ENCODE measurements at regions of chr2 and their contacts with region 1.

Region 1: DNA sequence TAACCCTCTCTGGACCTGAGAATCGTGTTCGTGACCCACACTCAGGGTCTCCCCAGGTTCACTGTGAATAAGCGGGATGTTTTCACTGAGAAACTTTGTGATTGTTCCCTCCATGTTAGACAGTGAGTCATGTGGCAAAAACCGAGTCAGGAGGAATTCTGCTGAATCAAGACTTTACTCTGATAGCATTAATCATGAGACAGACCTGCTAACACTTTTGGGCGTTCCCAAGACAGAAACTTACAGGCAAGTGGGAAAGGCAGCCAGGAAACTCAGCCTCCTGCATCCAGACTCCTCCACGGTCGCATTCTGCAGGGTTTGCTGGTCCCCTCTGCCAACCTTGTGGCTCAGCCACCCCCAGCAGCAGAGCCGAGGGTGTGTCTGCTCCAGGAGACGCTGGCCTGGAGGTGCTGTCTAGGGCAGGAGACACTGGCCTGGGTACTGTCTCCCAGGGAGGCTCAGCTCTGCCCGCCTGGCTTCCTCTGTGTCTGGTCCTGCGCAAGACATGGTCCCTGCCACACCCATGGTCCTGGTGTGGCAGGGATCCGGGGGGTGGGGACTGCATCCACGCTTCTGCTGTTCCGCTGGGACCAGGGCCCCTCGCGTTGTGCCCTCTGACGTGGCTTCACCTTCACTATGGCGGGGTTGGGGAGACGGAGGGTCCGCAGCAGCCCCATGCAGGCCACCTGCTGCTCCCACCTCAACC is 177.4 kb downstream of the TWIST2 start:
- DNase-seq: peak; percentile 52
- H3K4me3 ChIP-seq: no peak overlapping the region
- H3K27me3 ChIP-seq: peaks cover 2% of the 10 kb centered on the region
- CTCF ChIP-seq: no peak

Region 2: GRCh38 chr2:238861013-238861730 is 164.1 kb before region 1 on chr2:
- CTCF ChIA-PET with region 1: no interaction called
- POLR2A ChIA-PET with region 1: interaction called, 16 read pairs
- DNase-seq: no peak
- H3K4me3 ChIP-seq: peak overlapping the region; percentile 35
- H3K27me3 ChIP-seq: no peaks in the 10 kb centered on the region
- CTCF ChIP-seq: no peak

Region 3: DNA sequence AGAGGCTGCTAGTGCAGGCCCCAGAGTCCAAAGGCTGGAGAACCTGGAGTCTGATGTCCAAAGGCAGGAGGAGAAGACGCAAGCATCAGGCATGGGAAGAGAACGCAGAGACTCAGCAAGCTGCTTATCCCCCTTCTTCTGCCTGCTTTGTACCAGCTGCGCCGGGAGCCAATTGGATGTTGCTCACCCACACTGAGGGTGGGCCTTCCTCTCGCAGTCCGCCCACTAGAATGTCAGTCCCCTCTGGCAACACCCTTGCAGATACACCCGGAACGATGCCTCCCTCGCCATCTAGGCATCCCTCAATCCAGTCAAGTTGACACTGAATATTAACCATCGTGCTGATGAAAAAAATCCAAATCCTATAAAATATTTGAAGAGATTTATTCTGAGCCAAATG is 35.8 kb before region 1 on chr2:
- CTCF ChIA-PET with region 1: no interaction called
- POLR2A ChIA-PET with region 1: no interaction called
- DNase-seq: no peak
- H3K4me3 ChIP-seq: no peak overlapping the region
- H3K27me3 ChIP-seq: peaks cover 10% of the 10 kb centered on the region
- CTCF ChIP-seq: no peak

Region 4: GRCh38 chr2:239000500-239001073 is 24.7 kb before region 1 on chr2:
- CTCF ChIA-PET with region 1: no interaction called
- POLR2A ChIA-PET with region 1: interaction called, 15 read pairs
- DNase-seq: no peak
- H3K4me3 ChIP-seq: no peak overlapping the region
- H3K27me3 ChIP-seq: peaks cover 5% of the 10 kb centered on the region
- CTCF ChIP-seq: no peak

Measured in BJ (cell line).